Gastrocnemius medialis (tissue), 4 donors: ENCODE measurements at regions of chr9 and their contacts with region 1.

Region 1: DNA sequence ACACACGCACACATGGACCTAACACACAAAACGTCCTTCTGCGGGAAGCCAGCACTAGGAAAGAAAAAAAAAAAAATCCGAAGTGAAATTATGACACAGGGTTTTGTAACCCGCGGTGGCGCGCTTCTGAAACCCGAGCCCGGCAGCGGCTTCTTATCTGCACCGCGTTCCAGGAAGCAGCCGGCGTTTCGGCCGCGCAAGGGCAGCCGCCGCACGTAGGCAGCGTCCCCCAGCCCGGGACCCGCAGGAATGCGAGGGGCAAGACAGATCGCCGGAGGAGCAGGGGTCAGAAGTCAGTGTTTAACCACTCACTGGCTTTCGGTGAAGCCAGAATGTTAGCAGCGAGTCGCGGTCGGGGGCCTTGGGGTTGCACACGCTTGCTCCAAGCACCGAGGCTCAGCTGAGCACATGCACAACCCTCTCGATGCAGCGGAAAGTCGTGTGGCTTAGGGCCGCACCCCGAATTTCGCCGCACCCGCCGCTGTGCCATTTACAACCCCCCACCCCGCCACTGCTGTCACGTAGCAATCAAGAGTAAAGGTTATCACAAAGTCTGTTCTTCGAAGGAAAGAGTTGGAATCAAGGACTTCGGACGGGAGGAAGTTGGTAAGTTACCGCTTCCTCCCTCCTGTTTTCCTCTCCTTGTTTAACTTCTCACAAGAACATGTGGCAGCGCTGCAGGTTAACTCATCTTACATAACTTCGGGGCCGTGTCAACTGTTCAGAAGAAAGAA is 167.9 kb downstream of the AUH start:
- DNase-seq: peak; percentile 83 to 91
- ATAC-seq: peak; percentile 54 to 55
- H3K4me3 ChIP-seq: peak overlapping the region; percentile 58 to 67 (median 62)
- H3K27ac ChIP-seq: peak overlapping the region; percentile 97 to 100 (median 99)
- H3K4me1 ChIP-seq: peaks cover 51 to 67% of the 10 kb centered on the region in 2 donors
- H3K27me3 ChIP-seq: no peaks in the 10 kb centered on the region
- CTCF ChIP-seq: no peak
- POLR2A ChIP-seq: peak; percentile 89 to 91

Region 2: DNA sequence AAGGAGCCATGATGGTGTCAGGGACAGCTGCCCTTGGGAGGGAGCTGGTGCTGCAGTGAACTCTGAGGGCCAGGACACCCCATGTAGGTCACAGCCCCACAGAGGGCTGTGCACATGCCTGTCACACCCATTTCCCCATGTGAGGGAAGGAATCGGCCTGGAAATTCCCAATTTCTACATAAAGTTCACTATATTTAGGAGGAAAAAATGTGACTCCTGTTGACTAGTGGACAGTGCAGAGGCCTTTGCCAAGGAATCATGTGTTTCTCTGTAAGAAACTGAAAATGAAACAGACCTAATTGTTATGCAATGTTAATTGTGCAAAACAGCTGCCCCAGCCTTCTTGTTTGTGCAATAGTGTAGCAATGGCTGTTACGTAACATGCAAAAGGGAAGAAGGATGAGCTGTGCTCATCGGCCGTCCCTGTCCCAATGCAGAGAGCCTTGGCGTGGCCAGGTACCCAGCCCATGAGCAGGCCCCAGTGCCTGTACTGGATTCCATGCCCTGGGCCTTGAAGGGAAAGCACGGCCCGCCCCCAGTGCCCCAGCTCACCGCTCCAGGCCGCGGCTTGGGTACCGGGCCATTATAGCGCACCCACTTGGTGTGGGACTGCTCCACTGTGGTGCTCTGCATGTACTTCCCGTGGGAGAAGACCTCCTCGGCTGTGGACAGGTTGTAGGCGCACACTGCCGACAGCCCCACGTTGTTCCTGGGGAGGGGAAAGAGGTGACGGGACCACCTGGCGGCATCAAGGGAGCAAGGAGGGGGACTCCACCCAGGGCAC is 1805.5 kb before region 1 on chr9:
- in situ Hi-C with region 1: no loop called
- intact Hi-C with region 1: loop called (anchors 10 kb)
- DNase-seq: peak; percentile 85 to 94
- ATAC-seq: peak; percentile 83 to 87
- H3K4me3 ChIP-seq: no peak overlapping the region
- H3K27ac ChIP-seq: peak overlapping the region; percentile 79 to 93 (median 88)
- H3K4me1 ChIP-seq: peaks cover 20 to 26% of the 10 kb centered on the region in 2 donors
- H3K27me3 ChIP-seq: no peaks in the 10 kb centered on the region
- CTCF ChIP-seq: peak in 2 of 5 experiments; percentile 10 to 38
- POLR2A ChIP-seq: peak in 1 of 2 donors; percentile 19

Region 3: GRCh38 chr9:89878687-89879086 is 1315.1 kb before region 1 on chr9:
- in situ Hi-C with region 1: no loop called
- intact Hi-C with region 1: loop called (anchors 10 kb)
- DNase-seq: peak; percentile 93 to 98
- ATAC-seq: peak; percentile 80 to 86
- H3K4me3 ChIP-seq: no peak overlapping the region
- H3K27ac ChIP-seq: peak overlapping the region; percentile 82 to 96 (median 90)
- H3K4me1 ChIP-seq: peaks cover 59 to 66% of the 10 kb centered on the region in 2 donors
- H3K27me3 ChIP-seq: no peaks in the 10 kb centered on the region
- CTCF ChIP-seq: no peak
- POLR2A ChIP-seq: peak; percentile 54 to 70

Region 4: GRCh38 chr9:90593625-90594024 is 600.2 kb before region 1 on chr9:
- in situ Hi-C with region 1: no loop called
- intact Hi-C with region 1: no loop called
- DNase-seq: no peak
- ATAC-seq: no peak
- H3K4me3 ChIP-seq: no peak overlapping the region
- H3K27ac ChIP-seq: no peak overlapping the region
- H3K4me1 ChIP-seq: no peaks in the 10 kb centered on the region
- H3K27me3 ChIP-seq: no peaks in the 10 kb centered on the region
- CTCF ChIP-seq: no peak
- POLR2A ChIP-seq: no peak

Region 5: GRCh38 chr9:90921111-90921510 is 272.7 kb before region 1 on chr9:
- in situ Hi-C with region 1: loop called in 2 of 4 experiments (anchors 10 kb)
- intact Hi-C with region 1: loop called (anchors 1 kb)
- DNase-seq: peak; percentile 95 to 99
- ATAC-seq: peak; percentile 77 to 82
- H3K4me3 ChIP-seq: no peak overlapping the region
- H3K27ac ChIP-seq: peak overlapping the region; percentile 81 to 93 (median 92)
- H3K4me1 ChIP-seq: peaks cover 21 to 25% of the 10 kb centered on the region in 2 donors
- H3K27me3 ChIP-seq: no peaks in the 10 kb centered on the region
- CTCF ChIP-seq: peak in 1 of 5 experiments; percentile 19
- POLR2A ChIP-seq: peak in 1 of 2 donors; percentile 46

Region 6: DNA sequence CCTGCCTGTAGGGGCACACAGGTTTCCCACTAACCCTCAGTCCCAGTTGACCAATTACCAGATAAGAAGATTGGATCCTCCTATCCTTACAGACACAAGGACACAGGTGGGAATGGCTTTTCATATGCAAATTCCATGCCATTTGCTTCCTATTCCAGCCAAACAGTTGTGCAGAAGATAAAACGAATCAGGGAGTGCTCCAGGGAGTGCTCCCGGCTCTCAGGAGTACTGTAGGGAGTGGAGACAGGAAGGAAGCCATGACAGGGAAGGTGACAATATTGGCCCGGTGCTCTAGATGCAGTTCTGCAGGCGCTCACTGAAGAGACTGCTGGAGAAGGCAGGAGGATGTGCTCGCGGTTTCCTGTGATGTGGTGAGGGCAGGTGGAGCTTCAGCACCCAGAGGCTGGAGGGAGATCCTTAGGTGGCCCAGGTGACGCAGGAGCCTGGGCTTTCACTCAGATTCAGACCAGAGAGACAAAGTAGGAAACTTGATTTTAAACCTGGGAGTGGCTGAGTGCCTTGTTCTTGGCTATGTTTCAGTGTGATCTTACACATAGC is 92.1 kb before region 1 on chr9:
- in situ Hi-C with region 1: loop called in 3 of 4 experiments (anchors 10 kb)
- intact Hi-C with region 1: loop called (anchors 1 kb)
- DNase-seq: peak in 1 of 2 donors; percentile 49
- ATAC-seq: no peak
- H3K4me3 ChIP-seq: no peak overlapping the region
- H3K27ac ChIP-seq: peak overlapping the region; percentile 81 to 89 (median 84)
- H3K4me1 ChIP-seq: peaks cover 23 to 35% of the 10 kb centered on the region in 2 donors
- H3K27me3 ChIP-seq: no peaks in the 10 kb centered on the region
- CTCF ChIP-seq: no peak
- POLR2A ChIP-seq: no peak

Region 7: GRCh38 chr9:91273853-91274552 is 80.2 kb after region 1 on chr9:
- in situ Hi-C with region 1: no loop called
- intact Hi-C with region 1: no loop called
- DNase-seq: no peak
- ATAC-seq: peak in 1 of 2 donors; percentile 51
- H3K4me3 ChIP-seq: no peak overlapping the region
- H3K27ac ChIP-seq: no peak overlapping the region
- H3K4me1 ChIP-seq: peaks cover 18 to 22% of the 10 kb centered on the region in 2 donors
- H3K27me3 ChIP-seq: no peaks in the 10 kb centered on the region
- CTCF ChIP-seq: no peak
- POLR2A ChIP-seq: no peak

Region 8: DNA sequence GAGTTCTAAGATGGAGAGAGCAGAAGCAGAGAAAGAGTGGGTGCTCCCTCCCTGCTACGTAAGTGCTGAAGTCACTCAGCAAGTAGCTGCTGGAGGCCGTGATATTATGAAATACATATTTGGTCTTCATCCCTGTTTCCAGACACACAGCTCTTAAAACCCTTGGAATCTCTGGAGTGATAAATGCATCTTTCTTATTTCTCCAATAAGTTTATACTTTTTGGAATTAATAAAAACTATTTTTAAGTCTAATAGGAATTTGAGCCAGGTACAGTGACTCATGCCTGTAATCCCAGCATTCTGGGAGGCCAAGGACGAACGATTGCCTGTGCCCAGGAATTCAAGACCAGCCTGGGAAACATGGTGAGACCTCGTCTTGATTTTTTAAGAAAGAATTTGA is 107.3 kb after region 1 on chr9:
- in situ Hi-C with region 1: no loop called
- intact Hi-C with region 1: loop called (anchors 5 kb)
- DNase-seq: no peak
- ATAC-seq: peak; percentile 34 to 42
- H3K4me3 ChIP-seq: no peak overlapping the region
- H3K27ac ChIP-seq: peak overlapping the region; percentile 78 to 90 (median 84)
- H3K4me1 ChIP-seq: peaks cover 61 to 68% of the 10 kb centered on the region in 2 donors
- H3K27me3 ChIP-seq: no peaks in the 10 kb centered on the region
- CTCF ChIP-seq: no peak
- POLR2A ChIP-seq: no peak

Region 9: DNA sequence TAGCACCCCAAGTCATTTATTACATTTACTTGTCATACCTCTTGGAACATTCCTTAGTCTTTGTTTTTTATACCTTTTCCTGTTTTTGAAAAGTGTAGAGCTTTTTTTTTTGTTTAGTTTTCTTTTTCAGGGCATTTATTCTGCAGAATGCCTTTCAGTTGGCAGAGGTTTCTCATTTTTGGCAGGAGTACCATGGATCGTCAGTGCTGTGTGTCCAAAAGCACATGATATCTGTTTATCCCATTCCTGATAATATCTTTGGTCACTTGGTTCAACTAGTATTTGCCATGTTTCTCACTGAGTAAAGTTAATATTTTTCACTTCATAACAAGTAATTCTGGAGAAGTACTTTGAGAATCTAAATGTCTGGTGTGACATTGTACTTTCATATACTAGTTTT is 1199.9 kb after region 1 on chr9:
- in situ Hi-C with region 1: no loop called
- intact Hi-C with region 1: no loop called
- DNase-seq: no peak
- ATAC-seq: no peak
- H3K4me3 ChIP-seq: no peak overlapping the region
- H3K27ac ChIP-seq: no peak overlapping the region
- H3K4me1 ChIP-seq: peaks cover 0 to 11% of the 10 kb centered on the region in 2 donors
- H3K27me3 ChIP-seq: no peaks in the 10 kb centered on the region
- CTCF ChIP-seq: no peak
- POLR2A ChIP-seq: no peak

Region 10: GRCh38 chr9:92764988-92765936 is 1571.4 kb after region 1 on chr9:
- in situ Hi-C with region 1: no loop called
- intact Hi-C with region 1: no loop called
- DNase-seq: peak; percentile 99
- ATAC-seq: peak; percentile 84 to 86
- H3K4me3 ChIP-seq: peak overlapping the region; percentile 72 to 99 (median 94)
- H3K27ac ChIP-seq: peak overlapping the region; percentile 93 to 100 (median 98)
- H3K4me1 ChIP-seq: peaks cover 38 to 47% of the 10 kb centered on the region in 2 donors
- H3K27me3 ChIP-seq: no peaks in the 10 kb centered on the region
- CTCF ChIP-seq: peak; percentile 83 to 98 (median 96)
- POLR2A ChIP-seq: peak; percentile 80 to 82